Ovary (tissue), 10 donors: ENCODE measurements at regions of chr18 and their contacts with region 1.

Region 1: DNA sequence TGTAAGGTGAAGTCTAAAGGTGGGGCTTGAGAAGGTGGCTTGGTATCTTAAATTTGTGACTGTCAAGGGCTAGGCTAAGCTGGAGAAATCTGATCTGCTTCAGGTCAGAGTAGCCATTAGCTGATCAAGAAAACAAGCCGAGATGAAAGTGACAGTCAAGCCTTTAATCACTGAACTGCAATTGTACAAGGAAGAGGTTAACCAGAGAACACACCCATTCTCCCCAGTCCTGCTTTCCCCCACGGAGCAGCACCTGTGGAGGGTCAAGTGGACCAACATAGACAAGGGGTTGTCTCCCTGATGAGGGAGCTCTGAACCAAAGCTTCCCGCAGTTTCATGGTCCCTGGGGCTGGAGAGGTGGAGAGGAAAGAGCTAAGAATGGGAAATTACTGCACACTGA is 901.2 kb downstream of the DCC start:
- DNase-seq: no peak
- H3K4me3 ChIP-seq: no peak overlapping the region
- H3K27ac ChIP-seq: no peak overlapping the region
- H3K4me1 ChIP-seq: no peaks in the 10 kb centered on the region
- H3K27me3 ChIP-seq: no peaks in the 10 kb centered on the region
- CTCF ChIP-seq: no peak
- EP300 ChIP-seq: no peak
- POLR2A ChIP-seq: no peak

Region 2: GRCh38 chr18:53281406-53281805 is 40.2 kb after region 1 on chr18:
- intact Hi-C with region 1: no loop called
- DNase-seq: no peak
- H3K4me3 ChIP-seq: no peak overlapping the region
- H3K27ac ChIP-seq: no peak overlapping the region
- H3K4me1 ChIP-seq: no peaks in the 10 kb centered on the region
- H3K27me3 ChIP-seq: no peaks in the 10 kb centered on the region
- CTCF ChIP-seq: no peak
- EP300 ChIP-seq: no peak
- POLR2A ChIP-seq: no peak

Region 3: GRCh38 chr18:53800171-53800570 is 559.0 kb after region 1 on chr18:
- intact Hi-C with region 1: loop called in 1 of 4 experiments (anchors 10 kb)
- DNase-seq: no peak
- H3K4me3 ChIP-seq: no peak overlapping the region
- H3K27ac ChIP-seq: no peak overlapping the region
- H3K4me1 ChIP-seq: no peaks in the 10 kb centered on the region
- H3K27me3 ChIP-seq: no peaks in the 10 kb centered on the region
- CTCF ChIP-seq: no peak
- EP300 ChIP-seq: no peak
- POLR2A ChIP-seq: no peak